ENCODE measurements at regions of chr5 and their contacts with region 1.

Region 1: GRCh38 chr5:170633235-170634081 is 129.6 kb downstream of the KCNIP1 start:
- DNase-seq: peak; percentile 50
- ATAC-seq: peak; percentile 84
- H3K4me3 ChIP-seq: peak overlapping the region; percentile 44 to 54
- H3K27ac ChIP-seq: peak overlapping the region; percentile 64
- H3K4me1 ChIP-seq: peaks cover 11 to 27% of the 10 kb centered on the region in 2 experiments
- H3K27me3 ChIP-seq: no peaks in the 10 kb centered on the region
- CTCF ChIP-seq: no peak
- POLR2A ChIP-seq: peak; percentile 34
- RAD21 ChIP-seq: no peak

Region 2: GRCh38 chr5:170267431-170268152 is 365.9 kb before region 1 on chr5:
- CTCF ChIA-PET with region 1: no interaction called
- POLR2A ChIA-PET with region 1: no interaction called
- RAD21 ChIA-PET with region 1: no interaction called
- intact Hi-C with region 1: loop called (anchors 5 kb)
- DNase-seq: peak; percentile 37
- ATAC-seq: peak; percentile 97
- H3K4me3 ChIP-seq: no peak overlapping the region
- H3K27ac ChIP-seq: no peak overlapping the region
- H3K4me1 ChIP-seq: no peaks in the 10 kb centered on the region
- H3K27me3 ChIP-seq: peaks cover 43% of the 10 kb centered on the region
- CTCF ChIP-seq: peak; percentile 82 to 85 (median 84)
- POLR2A ChIP-seq: no peak
- RAD21 ChIP-seq: peak; percentile 56

Region 3: DNA sequence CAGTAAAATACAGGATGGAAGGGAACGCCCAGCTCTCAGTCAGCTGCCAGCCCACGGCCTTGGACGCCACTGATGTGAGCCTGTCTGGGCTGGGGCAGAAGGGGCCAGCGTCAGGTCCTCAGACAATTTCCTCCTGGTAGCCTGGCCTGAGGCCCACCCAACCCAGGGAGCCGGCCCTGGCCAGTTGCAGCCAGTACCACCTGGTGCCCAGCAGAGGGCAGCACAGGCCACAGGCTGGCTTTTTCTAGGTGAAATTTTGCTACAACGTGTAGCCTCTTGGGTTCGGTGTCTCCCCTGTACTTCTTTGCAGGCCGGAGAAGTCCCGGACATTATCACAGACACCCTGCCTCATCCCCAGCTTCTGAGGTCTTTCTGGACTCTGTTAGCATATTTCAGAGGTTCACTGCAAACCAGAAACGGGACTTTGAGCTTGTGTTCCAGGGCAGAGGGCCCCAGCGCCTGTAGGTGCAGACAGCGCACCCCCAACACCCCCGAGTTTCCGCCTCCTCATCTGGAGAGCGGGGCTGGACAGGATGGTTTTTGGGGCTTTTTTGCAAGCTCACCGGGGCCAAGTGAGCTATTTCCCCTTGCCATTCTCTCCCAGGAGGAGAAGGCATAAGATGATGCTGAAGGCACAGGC is 198.4 kb before region 1 on chr5:
- CTCF ChIA-PET with region 1: interaction called, 16 read pairs
- POLR2A ChIA-PET with region 1: no interaction called
- RAD21 ChIA-PET with region 1: interaction called in 1 of 2 experiments, 3 read pairs
- intact Hi-C with region 1: loop called (anchors 1 kb)
- DNase-seq: peak; percentile 32
- ATAC-seq: peak; percentile 91
- H3K4me3 ChIP-seq: no peak overlapping the region
- H3K27ac ChIP-seq: no peak overlapping the region
- H3K4me1 ChIP-seq: no peaks in the 10 kb centered on the region
- H3K27me3 ChIP-seq: peaks cover 14% of the 10 kb centered on the region
- CTCF ChIP-seq: peak; percentile 87 to 97 (median 95)
- POLR2A ChIP-seq: no peak
- RAD21 ChIP-seq: peak; percentile 92

Region 4: DNA sequence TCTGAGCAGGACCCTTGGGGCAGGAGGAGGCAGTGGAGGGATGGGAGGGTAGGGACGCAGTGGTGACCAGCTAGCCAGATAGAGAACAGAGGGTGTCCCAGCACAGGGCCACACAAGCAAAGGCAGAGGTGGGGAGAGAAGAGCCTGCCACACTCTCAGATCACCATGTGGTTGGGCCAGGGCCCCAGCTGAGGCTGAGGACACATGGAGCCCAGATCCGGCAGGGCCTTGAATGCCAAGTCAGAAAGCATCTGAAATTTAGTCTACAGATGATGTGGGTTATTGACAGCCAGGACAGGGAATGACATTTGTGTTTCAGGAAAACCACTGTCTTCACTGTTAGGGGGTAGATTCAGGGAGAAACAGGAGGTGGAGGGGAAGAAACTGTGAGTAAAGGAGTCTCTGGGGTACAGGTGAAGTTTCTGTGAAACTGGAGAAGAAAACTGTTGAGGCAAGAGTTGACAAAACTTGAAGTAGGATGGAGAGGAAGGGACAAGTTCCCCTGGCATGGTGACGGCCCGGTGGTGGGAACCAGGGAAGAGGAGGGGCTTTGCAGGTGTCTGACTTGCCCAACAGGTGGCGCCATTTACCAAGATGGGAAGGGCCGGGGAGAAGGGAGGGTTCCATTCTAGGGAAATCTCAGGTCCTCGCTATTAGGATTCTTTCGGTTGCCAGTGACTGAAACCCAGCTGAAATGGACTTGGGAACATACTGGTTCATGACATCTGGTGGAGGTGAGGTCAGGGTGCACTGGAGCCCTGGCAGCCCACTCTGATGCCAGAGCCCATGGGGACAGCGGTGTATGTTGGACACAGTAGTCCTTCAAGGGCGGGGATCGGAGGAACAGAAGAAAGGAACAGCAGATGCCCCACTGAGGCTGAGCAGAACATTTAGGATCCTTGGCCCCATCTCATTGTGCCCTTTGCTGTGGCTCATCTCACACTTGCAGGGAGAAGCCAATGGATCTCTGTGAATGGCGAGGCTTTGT is 29.6 kb before region 1 on chr5:
- CTCF ChIA-PET with region 1: interaction called, 7 read pairs
- POLR2A ChIA-PET with region 1: no interaction called
- RAD21 ChIA-PET with region 1: no interaction called
- intact Hi-C with region 1: loop called (anchors 1 kb)
- DNase-seq: peak; percentile 22
- ATAC-seq: peak; percentile 99
- H3K4me3 ChIP-seq: no peak overlapping the region
- H3K27ac ChIP-seq: no peak overlapping the region
- H3K4me1 ChIP-seq: no peaks in the 10 kb centered on the region
- H3K27me3 ChIP-seq: peaks cover 11% of the 10 kb centered on the region
- CTCF ChIP-seq: peak; percentile 84 to 89 (median 86)
- POLR2A ChIP-seq: no peak
- RAD21 ChIP-seq: peak; percentile 88

Region 5: DNA sequence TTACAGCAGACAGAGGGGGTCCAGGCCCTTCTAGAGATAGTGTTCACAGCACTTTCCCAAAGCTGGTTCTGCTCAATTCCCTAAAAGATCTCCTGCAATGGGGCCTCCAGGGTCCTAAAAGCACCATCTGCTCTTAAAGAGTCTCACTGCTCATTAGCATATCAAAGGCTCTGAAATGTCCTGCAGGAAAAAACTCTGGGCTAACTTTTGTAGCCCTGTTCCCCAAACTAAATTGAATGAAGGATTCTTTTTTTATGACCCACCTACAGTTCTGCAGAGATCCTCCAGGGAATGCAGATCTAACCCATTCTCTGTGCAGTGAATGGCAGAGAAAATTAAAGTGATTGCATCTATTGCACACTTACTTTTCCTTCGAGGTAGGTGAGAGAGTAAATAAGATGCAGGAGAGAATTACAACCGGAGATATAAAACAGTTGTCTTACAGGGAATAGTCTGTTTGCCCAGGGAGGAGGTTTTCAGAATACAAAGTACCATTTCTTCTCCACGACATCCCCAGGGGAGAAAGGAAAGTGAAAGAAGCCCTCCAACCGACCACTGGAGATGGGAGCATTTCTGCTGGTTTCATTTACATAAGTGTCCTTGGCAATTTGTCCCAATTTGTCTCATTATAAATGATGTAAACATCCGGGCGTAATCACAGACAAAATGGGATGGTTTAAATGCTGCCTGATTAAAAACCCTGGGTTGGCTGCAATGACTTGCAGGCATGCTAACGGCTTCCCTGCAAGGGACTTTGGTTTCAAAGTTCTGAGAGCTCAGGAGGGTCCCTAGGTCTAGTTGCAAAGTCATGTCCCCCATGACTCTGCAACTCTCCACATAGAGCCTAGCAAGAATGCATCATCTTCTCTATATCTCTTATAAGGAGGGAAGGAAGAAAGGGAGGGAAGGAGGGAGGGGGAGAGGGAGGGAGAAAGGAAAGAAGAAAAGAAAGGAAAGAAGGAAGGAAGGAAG is 15.7 kb before region 1 on chr5:
- CTCF ChIA-PET with region 1: interaction called, 18 read pairs
- POLR2A ChIA-PET with region 1: interaction called, 3 read pairs
- RAD21 ChIA-PET with region 1: no interaction called
- intact Hi-C with region 1: no loop called
- DNase-seq: no peak
- ATAC-seq: no peak
- H3K4me3 ChIP-seq: no peak overlapping the region
- H3K27ac ChIP-seq: no peak overlapping the region
- H3K4me1 ChIP-seq: peaks cover 0 to 12% of the 10 kb centered on the region in 2 experiments; a peak in 2 of 4 replicates
- H3K27me3 ChIP-seq: peaks cover 18% of the 10 kb centered on the region; the same call in 1 of the 2 replicates
- CTCF ChIP-seq: no peak
- POLR2A ChIP-seq: no peak
- RAD21 ChIP-seq: no peak

Measured in HCT116 (cell line).